Right cardiac atrium (tissue), 5 donors: ENCODE measurements at regions of chr10 and their contacts with region 1.

Region 1: DNA sequence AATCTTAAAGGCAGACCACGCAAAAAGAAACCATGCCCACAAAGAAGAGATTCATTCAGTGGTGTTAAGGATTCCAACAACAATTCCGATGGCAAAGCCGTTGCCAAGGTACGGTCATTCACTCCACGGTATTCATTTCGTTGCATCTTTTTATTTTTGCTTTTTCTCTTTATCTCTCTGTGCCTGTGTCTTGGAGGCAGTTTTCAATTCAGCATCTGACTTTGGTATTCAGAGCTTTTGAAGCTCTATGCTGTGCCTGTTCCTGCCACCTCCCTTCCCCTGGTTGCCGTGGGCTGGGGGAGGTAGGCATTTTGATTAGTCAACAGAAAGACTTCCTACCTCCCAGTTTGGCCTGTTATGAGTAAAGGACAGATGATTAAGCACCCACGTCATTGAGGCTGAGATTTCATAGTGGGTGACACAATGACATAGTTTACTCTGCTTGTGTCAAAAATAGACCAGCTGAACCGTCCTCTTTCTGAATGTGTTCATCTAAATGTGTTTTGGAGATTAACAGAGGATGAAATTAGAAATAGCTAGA is 149.5 kb downstream of the ARID5B start:
- DNase-seq: peak; percentile 55 to 70 (median 63)
- ATAC-seq: peak; percentile 70 to 78
- H3K4me3 ChIP-seq: peak overlapping the region; percentile 93
- H3K27ac ChIP-seq: peak overlapping the region; percentile 96
- H3K4me1 ChIP-seq: peaks cover 20% of the 10 kb centered on the region
- H3K27me3 ChIP-seq: no peaks in the 10 kb centered on the region

Region 2: GRCh38 chr10:61760943-61761824 is 289.8 kb before region 1 on chr10:
- intact Hi-C with region 1: no loop called
- DNase-seq: no peak
- ATAC-seq: no peak
- H3K4me3 ChIP-seq: no peak overlapping the region
- H3K27ac ChIP-seq: no peak overlapping the region
- H3K4me1 ChIP-seq: no peaks in the 10 kb centered on the region
- H3K27me3 ChIP-seq: no peaks in the 10 kb centered on the region

Region 3: DNA sequence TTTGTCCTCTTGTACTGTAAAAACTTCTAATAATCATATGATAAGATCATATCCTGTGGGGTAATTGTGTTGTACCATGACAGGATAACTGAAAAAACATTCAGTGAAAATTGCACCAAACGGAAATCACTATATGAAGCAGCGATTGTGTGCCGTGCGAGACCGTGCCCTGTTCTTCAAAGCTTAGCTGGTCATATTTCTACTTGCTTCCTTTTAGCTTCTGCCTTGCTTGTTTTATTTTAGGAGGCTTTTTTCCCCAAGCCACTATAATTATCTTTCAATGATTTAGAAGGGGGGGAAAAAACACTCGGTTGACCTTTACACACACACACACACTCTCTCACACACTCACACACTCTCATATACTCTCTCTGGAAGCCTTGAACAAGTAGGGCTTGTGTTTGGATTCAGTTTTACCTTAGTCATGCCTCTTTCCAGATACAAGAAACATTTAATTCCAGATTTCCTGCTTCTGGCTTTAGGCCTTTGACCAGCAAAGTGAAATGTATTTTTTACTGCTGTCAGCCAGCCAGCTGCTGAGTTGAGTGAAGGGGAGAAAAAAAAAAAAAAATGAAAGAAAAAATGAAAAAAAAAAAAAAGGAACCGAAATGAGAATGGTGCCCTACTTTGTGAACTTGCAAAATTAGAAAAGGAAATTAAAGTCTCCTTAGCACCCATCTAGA is 31.9 kb after region 1 on chr10:
- intact Hi-C with region 1: loop called in 2 of 4 experiments (anchors 5 kb)
- DNase-seq: peak in 1 of 3 donors; percentile 68
- ATAC-seq: peak; percentile 61
- H3K4me3 ChIP-seq: peak overlapping the region; percentile 17
- H3K27ac ChIP-seq: peak overlapping the region; percentile 99
- H3K4me1 ChIP-seq: peaks cover 6% of the 10 kb centered on the region
- H3K27me3 ChIP-seq: no peaks in the 10 kb centered on the region

Region 4: GRCh38 chr10:62093863-62094291 is 42.9 kb after region 1 on chr10:
- intact Hi-C with region 1: loop called in 2 of 4 experiments (anchors 5 kb)
- DNase-seq: no peak
- ATAC-seq: peak in 1 of 2 donors; percentile 32
- H3K4me3 ChIP-seq: no peak overlapping the region
- H3K27ac ChIP-seq: peak overlapping the region; percentile 44
- H3K4me1 ChIP-seq: peaks cover 8% of the 10 kb centered on the region
- H3K27me3 ChIP-seq: no peaks in the 10 kb centered on the region